ENCODE measurements at regions of chr14 and their contacts with region 1.

Region 1: GRCh38 chr14:57293866-57294837 is 25.4 kb downstream of the AP5M1 start:
- DNase-seq: peak; percentile 53
- ATAC-seq: peak; percentile 50
- H3K4me3 ChIP-seq: no peak overlapping the region
- H3K27ac ChIP-seq: no peak overlapping the region
- H3K4me1 ChIP-seq: peaks cover 6% of the 10 kb centered on the region
- H3K27me3 ChIP-seq: no peaks in the 10 kb centered on the region
- CTCF ChIP-seq: peak; percentile 68

Region 2: GRCh38 chr14:56555921-56556570 is 738.1 kb before region 1 on chr14:
- CTCF ChIA-PET with region 1: no interaction called
- POLR2A ChIA-PET with region 1: no interaction called
- intact Hi-C with region 1: loop called (anchors 2 kb)
- DNase-seq: peak; percentile 86
- ATAC-seq: peak; percentile 84
- H3K4me3 ChIP-seq: no peak overlapping the region
- H3K27ac ChIP-seq: no peak overlapping the region
- H3K4me1 ChIP-seq: no peaks in the 10 kb centered on the region; the same call in 1 of the 2 replicates
- H3K27me3 ChIP-seq: peaks cover 76% of the 10 kb centered on the region
- CTCF ChIP-seq: peak; percentile 99

Region 3: GRCh38 chr14:56659964-56660551 is 634.1 kb before region 1 on chr14:
- CTCF ChIA-PET with region 1: no interaction called
- POLR2A ChIA-PET with region 1: no interaction called
- intact Hi-C with region 1: loop called (anchors 2 kb)
- DNase-seq: peak; percentile 82
- ATAC-seq: peak; percentile 83
- H3K4me3 ChIP-seq: no peak overlapping the region
- H3K27ac ChIP-seq: no peak overlapping the region
- H3K4me1 ChIP-seq: no peaks in the 10 kb centered on the region
- H3K27me3 ChIP-seq: peaks cover 41% of the 10 kb centered on the region
- CTCF ChIP-seq: peak; percentile 98

Region 4: DNA sequence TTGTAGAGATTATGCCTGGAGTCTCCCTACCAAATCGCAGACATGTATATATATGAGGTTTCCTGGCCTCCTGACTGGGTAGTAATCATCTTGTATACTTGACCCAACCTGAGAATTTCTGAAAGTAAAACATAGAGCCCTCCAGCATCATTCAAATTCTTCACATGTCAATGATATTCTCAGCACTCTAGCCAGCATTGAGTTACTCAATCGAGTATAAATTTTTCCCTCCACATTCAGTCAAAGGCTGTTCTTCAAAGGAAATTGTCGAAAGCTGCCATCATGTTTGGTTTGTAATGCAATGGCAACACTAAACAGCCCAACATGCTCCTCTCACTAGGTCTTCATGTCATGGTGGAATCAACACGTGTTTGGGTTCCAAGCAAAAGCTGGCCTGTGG is 146.1 kb before region 1 on chr14:
- CTCF ChIA-PET with region 1: interaction called, 19 read pairs
- POLR2A ChIA-PET with region 1: no interaction called
- intact Hi-C with region 1: no loop called
- DNase-seq: no peak
- ATAC-seq: no peak
- H3K4me3 ChIP-seq: no peak overlapping the region
- H3K27ac ChIP-seq: no peak overlapping the region
- H3K4me1 ChIP-seq: no peaks in the 10 kb centered on the region
- H3K27me3 ChIP-seq: peaks cover 92% of the 10 kb centered on the region
- CTCF ChIP-seq: no peak

Region 5: GRCh38 chr14:57245941-57246340 is 48.2 kb before region 1 on chr14:
- CTCF ChIA-PET with region 1: no interaction called
- POLR2A ChIA-PET with region 1: no interaction called
- intact Hi-C with region 1: loop called (anchors 2 kb)
- DNase-seq: no peak
- ATAC-seq: no peak
- H3K4me3 ChIP-seq: no peak overlapping the region
- H3K27ac ChIP-seq: no peak overlapping the region
- H3K4me1 ChIP-seq: no peaks in the 10 kb centered on the region
- H3K27me3 ChIP-seq: no peaks in the 10 kb centered on the region
- CTCF ChIP-seq: no peak

Region 6: DNA sequence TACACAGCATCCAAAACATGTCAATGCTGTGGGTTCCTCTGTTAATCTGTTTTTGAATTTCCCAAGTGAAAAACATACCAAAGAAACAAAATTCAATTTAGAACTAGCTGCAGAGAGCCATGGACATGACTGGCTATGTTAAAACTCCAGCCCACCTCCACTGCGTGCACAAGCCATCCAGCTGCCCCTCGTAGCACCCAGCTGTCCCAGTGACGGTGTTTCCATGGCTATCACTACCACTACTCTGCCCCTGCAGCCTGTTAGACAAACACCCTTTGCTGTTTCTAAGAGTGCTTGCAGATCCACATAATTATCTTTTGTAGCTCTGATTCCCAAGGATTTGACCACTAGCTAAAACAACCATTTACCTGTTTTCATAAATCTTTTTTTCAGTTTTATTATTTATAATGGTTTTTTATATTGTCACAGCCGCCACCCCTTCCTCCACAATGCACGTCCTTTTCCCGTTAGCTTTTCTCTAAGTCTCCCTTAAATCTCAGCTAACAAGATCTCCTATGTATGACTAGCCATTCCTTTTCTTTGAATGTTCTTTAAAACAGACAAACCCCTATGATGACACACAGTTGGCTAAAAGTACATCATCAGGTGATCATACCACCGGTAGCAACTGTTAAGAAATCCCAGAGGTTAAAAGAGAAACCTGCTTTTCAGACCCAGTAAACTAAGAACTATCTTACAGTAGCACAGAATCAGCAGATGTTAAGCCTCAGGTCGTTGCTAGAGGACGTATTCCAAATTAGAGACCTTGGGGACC is 58.4 kb after region 1 on chr14:
- CTCF ChIA-PET with region 1: no interaction called
- POLR2A ChIA-PET with region 1: no interaction called
- intact Hi-C with region 1: loop called (anchors 2 kb)
- DNase-seq: peak; percentile 75
- ATAC-seq: no peak; the same call in 1 of the 2 replicates
- H3K4me3 ChIP-seq: no peak overlapping the region
- H3K27ac ChIP-seq: no peak overlapping the region
- H3K4me1 ChIP-seq: peaks cover 38% of the 10 kb centered on the region
- H3K27me3 ChIP-seq: peaks cover 7% of the 10 kb centered on the region; the same call in 1 of the 2 replicates
- CTCF ChIP-seq: no peak

Measured in PC-3 (cell line).